Activated B cell treated with CpG ODN at 0.5 μM for 24 hours (primary cell): ENCODE measurements at regions of chr10 and their contacts with region 1.

Region 1: GRCh38 chr10:30783939-30784500 is 154.5 kb upstream of the LYZL2 start:
- DNase-seq: peak; percentile 61
- ATAC-seq: peak; percentile 86
- H3K4me3 Mint-ChIP-seq: peak overlapping the region; percentile 81
- H3K27ac Mint-ChIP-seq: no peak overlapping the region
- H3K4me1 Mint-ChIP-seq: peaks cover 11% of the 10 kb centered on the region
- H3K27me3 Mint-ChIP-seq: peaks cover 14% of the 10 kb centered on the region
- CTCF ChIP-seq: peak; percentile 60

Region 2: GRCh38 chr10:30722956-30723620 is 60.9 kb before region 1 on chr10:
- CTCF ChIA-PET with region 1: no interaction called
- POLR2A ChIA-PET with region 1: no interaction called
- intact Hi-C with region 1: loop called (anchors 1 kb)
- DNase-seq: no peak
- ATAC-seq: peak; percentile 29
- H3K4me3 Mint-ChIP-seq: no peak overlapping the region
- H3K27ac Mint-ChIP-seq: no peak overlapping the region
- H3K4me1 Mint-ChIP-seq: peaks cover 15% of the 10 kb centered on the region
- H3K27me3 Mint-ChIP-seq: peaks cover 21% of the 10 kb centered on the region
- CTCF ChIP-seq: no peak

Region 3: GRCh38 chr10:31353574-31353973 is 569.6 kb after region 1 on chr10:
- CTCF ChIA-PET with region 1: interaction called, 9 read pairs
- POLR2A ChIA-PET with region 1: no interaction called
- intact Hi-C with region 1: loop called (anchors 1 kb)
- DNase-seq: no peak
- ATAC-seq: peak; percentile 81
- H3K4me3 Mint-ChIP-seq: no peak overlapping the region
- H3K27ac Mint-ChIP-seq: no peak overlapping the region
- H3K4me1 Mint-ChIP-seq: peaks cover 47% of the 10 kb centered on the region
- H3K27me3 Mint-ChIP-seq: no peaks in the 10 kb centered on the region
- CTCF ChIP-seq: no peak

Region 4: GRCh38 chr10:31603235-31604087 is 819.4 kb after region 1 on chr10:
- CTCF ChIA-PET with region 1: no interaction called
- POLR2A ChIA-PET with region 1: no interaction called
- intact Hi-C with region 1: loop called (anchors 5 kb)
- DNase-seq: peak; percentile 64
- ATAC-seq: peak; percentile 97
- H3K4me3 Mint-ChIP-seq: peak overlapping the region; percentile 83
- H3K27ac Mint-ChIP-seq: no peak overlapping the region
- H3K4me1 Mint-ChIP-seq: peaks cover 12% of the 10 kb centered on the region
- H3K27me3 Mint-ChIP-seq: peaks cover 6% of the 10 kb centered on the region
- CTCF ChIP-seq: no peak

Region 5: DNA sequence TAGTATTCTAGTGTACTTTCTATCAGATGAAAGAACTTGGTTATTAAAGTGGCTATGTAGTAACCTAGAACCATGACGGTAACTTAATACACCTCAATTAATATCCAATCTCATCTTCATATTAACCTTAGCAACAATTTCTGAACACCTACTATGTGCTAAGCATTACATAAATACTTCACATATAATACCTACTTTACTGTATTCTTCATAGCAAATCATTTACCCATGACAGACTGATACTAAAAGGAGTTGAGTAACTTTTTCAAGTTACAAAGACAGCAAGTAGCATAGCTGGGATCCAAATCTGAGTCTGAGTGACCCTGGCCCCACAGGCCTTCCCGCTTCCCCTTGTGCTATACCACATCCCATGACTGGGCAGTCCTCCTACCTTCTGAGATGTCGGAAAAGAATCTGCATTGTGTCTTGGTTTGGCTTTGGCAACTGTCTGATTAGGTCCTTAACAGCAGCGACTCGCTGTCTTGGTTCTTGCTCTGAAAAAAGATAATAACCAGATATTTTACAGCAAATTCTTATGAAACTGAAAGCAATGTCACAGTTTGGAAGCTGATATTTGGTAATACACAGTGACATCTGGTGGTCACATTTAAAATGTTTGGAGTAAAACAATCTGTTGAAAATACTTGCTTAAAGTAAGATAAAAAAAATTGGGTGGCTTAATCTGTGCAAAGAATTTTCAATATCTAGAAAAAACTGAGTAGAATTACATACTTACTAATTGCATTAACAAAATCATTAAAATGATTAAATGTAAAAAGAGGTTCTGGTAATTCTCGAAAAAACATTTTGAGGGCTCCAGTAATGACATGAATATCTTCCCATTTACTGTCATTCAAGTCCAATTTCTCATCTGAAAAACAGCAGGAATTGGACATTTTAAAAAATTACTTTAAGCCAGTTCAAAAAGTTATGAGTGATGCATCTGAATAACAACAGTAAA is 1024.5 kb after region 1 on chr10:
- CTCF ChIA-PET with region 1: interaction called, 57 read pairs
- POLR2A ChIA-PET with region 1: no interaction called
- intact Hi-C with region 1: loop called (anchors 1 kb)
- DNase-seq: no peak
- ATAC-seq: no peak
- H3K4me3 Mint-ChIP-seq: no peak overlapping the region
- H3K27ac Mint-ChIP-seq: peak overlapping the region; percentile 6
- H3K4me1 Mint-ChIP-seq: peaks cover 7% of the 10 kb centered on the region
- H3K27me3 Mint-ChIP-seq: no peaks in the 10 kb centered on the region
- CTCF ChIP-seq: no peak